Dorsolateral prefrontal cortex (tissue), 120 donors: ENCODE measurements at regions of chr11 and their contacts with region 1.

Region 1: DNA sequence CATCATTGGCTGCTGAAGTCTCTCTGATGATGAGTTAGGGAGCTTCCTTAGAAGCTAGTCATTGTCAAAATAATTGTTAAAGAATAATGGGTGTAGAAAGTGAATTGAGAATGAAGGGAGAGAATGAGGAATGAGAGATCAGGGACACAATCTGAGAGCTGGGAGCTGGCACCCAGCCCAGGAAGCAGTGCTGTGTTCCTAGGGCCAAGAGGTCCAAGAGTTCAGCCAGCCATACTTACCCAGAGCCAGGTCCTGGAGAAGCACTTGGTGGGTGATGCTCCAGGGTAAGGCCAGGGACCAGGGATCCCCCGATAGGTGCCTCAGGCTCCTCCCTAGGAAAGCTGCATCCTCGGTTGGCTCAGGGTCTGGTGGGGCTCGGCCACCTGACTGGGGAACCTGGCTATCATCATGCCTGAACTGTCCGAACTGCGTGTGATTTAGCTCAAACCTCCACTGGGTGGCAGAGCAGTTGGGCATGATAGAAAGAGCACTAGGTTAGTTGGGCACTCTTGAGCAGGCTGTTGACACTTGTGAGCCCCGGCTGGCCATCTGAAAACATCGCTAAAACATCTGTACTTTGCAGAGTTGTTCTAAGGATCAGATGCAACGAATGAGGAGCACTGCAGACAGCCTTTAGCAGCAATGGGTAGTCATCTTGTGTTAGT is 123.9 kb upstream of the NCAM1 start:
- DNase-seq: peak in 8 of 10 donors; percentile 42 to 80 (median 66)
- H3K4me3 ChIP-seq: no peak overlapping the region
- H3K27ac ChIP-seq: peak overlapping the region in 15 of 59 donors; percentile 0 to 55 (median 33)
- H3K27me3 ChIP-seq: no peaks in the 10 kb centered on the region
- CTCF ChIP-seq: peak in 54 of 56 donors; percentile 25 to 80 (median 58)

Region 2: GRCh38 chr11:113113801-113114706 is 276.8 kb after region 1 on chr11:
- intact Hi-C with region 1: loop called (anchors 10 kb)
- DNase-seq: peak; percentile 60 to 84 (median 77)
- H3K4me3 ChIP-seq: peak overlapping the region in 4 of 59 donors; percentile 5 to 22 (median 14)
- H3K27ac ChIP-seq: peak overlapping the region in 51 of 59 donors; percentile 14 to 75 (median 57)
- H3K27me3 ChIP-seq: no peaks in the 10 kb centered on the region
- CTCF ChIP-seq: peak; percentile 61 to 94 (median 83)

Region 3: GRCh38 chr11:113289431-113290187 is 452.3 kb after region 1 on chr11:
- intact Hi-C with region 1: loop called in 1 of 2 experiments (anchors 5 kb)
- DNase-seq: peak; percentile 64 to 83 (median 66)
- H3K4me3 ChIP-seq: no peak overlapping the region
- H3K27ac ChIP-seq: no peak overlapping the region
- H3K27me3 ChIP-seq: peaks cover 0 to 4% (median 0%) of the 10 kb centered on the region in 45 donors
- CTCF ChIP-seq: peak; percentile 73 to 98 (median 89)